Vagina (tissue), 2 donors: ENCODE measurements at regions of chr17 and their contacts with region 1.

Region 1: DNA sequence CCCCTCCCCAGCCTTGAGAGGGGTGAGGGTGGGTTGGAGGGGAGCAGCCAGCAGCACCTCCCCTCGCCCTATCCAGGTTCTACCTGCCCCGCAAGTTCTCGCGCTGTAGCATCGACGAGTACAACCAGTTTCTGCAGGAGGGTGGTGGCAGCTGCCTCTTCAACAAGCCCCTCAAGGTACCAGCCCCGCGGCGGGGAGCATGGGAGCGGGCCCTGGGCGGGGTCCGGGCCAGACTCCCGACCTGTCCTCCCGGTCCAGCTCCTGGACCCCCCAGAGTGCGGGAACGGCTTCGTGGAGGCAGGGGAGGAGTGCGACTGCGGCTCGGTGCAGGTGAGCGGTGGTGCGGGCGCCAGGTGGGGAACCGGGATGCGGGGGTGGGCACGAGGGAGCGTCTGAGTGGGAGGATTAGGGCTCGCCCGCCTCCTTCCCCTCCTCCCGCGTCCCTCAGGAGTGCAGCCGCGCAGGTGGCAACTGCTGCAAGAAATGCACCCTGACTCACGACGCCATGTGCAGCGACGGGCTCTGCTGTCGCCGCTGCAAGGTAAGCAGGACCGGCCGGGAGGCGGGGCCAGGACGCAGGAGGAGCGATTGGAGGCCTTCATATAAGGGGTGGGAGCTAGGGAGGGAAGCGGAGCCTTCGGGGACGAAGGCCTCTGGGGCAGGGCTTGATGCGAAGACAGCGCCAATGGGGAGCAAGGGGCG is 16.5 kb downstream of the ADAM11 start:
- DNase-seq: peak in 1 of 2 donors; percentile 94
- H3K4me3 ChIP-seq: peak overlapping the region; percentile 54 to 68
- H3K27ac ChIP-seq: no peak overlapping the region
- H3K4me1 ChIP-seq: peaks cover 18% of the 10 kb centered on the region
- H3K27me3 ChIP-seq: no peaks in the 10 kb centered on the region
- CTCF ChIP-seq: peak in 1 of 3 experiments; percentile 7
- POLR2A ChIP-seq: no peak

Region 2: GRCh38 chr17:44210342-44211192 is 564.7 kb before region 1 on chr17:
- intact Hi-C with region 1: no loop called
- DNase-seq: no peak
- H3K4me3 ChIP-seq: peak overlapping the region in 1 of 2 donors; percentile 17
- H3K27ac ChIP-seq: peak overlapping the region; percentile 66
- H3K4me1 ChIP-seq: peaks cover 27% of the 10 kb centered on the region
- H3K27me3 ChIP-seq: no peaks in the 10 kb centered on the region
- CTCF ChIP-seq: peak; percentile 96 to 98 (median 98)
- POLR2A ChIP-seq: no peak

Region 3: GRCh38 chr17:44864866-44865660 is 89.8 kb after region 1 on chr17:
- intact Hi-C with region 1: loop called (anchors 5 kb)
- DNase-seq: no peak
- H3K4me3 ChIP-seq: no peak overlapping the region
- H3K27ac ChIP-seq: peak overlapping the region; percentile 12
- H3K4me1 ChIP-seq: no peaks in the 10 kb centered on the region
- H3K27me3 ChIP-seq: no peaks in the 10 kb centered on the region
- CTCF ChIP-seq: peak; percentile 80 to 94 (median 81)
- POLR2A ChIP-seq: no peak

Region 4: GRCh38 chr17:45021607-45022287 is 246.5 kb after region 1 on chr17:
- intact Hi-C with region 1: loop called (anchors 5 kb)
- DNase-seq: no peak
- H3K4me3 ChIP-seq: peak overlapping the region; percentile 29 to 46
- H3K27ac ChIP-seq: peak overlapping the region; percentile 86
- H3K4me1 ChIP-seq: peaks cover 50% of the 10 kb centered on the region
- H3K27me3 ChIP-seq: no peaks in the 10 kb centered on the region
- CTCF ChIP-seq: peak; percentile 52 to 97 (median 75)
- POLR2A ChIP-seq: no peak